Common myeloid progenitor, CD34-positive (primary cell): ENCODE measurements at regions of chr18 and their contacts with region 1.

Region 1: DNA sequence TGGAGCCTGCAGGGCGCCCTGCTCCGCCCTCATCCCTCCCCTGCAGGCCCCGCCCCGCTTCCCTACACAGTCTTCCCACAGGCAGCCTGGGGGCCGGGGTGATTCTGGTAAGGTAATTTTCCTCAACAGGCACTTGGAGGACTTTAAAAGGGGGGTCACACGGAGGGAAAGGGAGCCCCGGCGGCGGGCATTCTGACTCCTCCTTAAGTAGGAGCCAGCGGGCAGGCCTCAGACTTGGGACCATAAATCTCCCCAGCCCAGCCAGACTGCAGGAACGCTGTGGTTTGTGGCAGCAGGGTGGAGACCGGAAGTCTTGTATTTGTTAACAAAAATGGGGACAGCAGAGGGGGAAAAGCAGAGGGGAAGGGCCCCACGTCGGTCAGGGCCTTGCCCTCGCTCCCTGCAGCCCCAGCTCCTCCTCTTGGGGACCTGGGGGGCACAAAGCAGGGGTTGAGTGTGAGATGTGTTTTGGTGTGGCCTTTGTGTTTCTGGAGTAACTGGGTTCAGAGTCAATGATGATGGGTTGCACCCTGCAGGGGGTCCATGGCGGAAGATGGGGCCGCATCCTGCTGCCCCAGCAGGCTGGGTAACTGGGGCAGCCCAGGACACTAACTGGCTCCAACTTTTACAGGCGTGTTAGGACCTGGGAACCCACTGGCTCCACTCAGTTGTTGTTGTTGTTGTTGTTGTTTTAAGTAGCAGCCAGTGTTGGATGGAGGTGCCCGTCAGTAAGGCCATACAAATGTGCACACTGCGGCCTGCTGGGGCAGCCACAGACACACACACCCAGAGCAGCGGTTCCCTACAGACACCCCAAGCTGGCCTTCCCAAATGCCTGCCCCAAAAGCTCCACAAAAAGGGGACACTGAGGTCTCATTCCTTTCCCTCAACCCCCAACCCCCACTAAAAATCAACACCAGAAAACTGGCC is 27.7 kb downstream of the SMAD7 start:
- DNase-seq: peak; percentile 74 to 89 (median 84)
- H3K4me3 ChIP-seq: peak overlapping the region in 4 of 7 experiments; percentile 3 to 39 (median 37)
- H3K27ac ChIP-seq: no peak overlapping the region
- H3K4me1 ChIP-seq: peaks cover 7 to 59% (median 48%) of the 10 kb centered on the region in 4 experiments
- H3K27me3 ChIP-seq: peaks cover 0 to 10% (median 0%) of the 10 kb centered on the region in 5 experiments

Region 2: DNA sequence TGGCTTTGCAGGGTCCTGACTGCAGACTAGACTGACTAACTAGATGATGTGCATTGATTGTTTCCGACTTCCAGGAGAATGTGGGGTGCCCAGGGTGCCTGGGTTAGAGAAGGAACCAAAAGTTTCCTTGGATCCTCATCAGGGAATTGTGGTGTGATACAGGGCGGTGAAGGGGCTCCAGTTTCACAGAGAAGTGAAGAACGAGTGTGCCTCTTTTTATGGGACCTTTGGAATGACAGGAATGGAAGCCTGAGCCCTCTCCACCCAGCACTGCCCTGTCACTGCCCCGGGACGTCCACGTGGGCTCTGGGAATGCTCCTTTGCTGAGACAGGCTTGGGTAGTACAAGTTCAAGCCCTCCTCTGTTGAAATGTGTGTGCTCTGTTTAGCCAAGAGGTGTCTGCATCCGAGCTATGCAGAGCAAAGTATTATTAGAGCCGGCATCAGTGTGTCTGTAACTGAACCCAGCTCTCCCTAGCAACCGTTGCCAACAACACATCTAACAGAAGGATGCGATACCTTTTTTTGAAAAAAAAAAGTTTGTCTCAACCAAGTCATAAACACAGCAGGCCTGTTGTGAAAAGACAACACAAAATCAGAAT is 155.9 kb before region 1 on chr18:
- CTCF ChIA-PET with region 1: no interaction called
- POLR2A ChIA-PET with region 1: no interaction called
- DNase-seq: peak in 2 of 3 donors; percentile 25 to 50
- H3K4me3 ChIP-seq: no peak overlapping the region
- H3K27ac ChIP-seq: no peak overlapping the region
- H3K4me1 ChIP-seq: peaks cover 0 to 23% (median 15%) of the 10 kb centered on the region in 4 experiments
- H3K27me3 ChIP-seq: no peaks in the 10 kb centered on the region

Region 3: GRCh38 chr18:48934723-48935432 is 11.8 kb after region 1 on chr18:
- CTCF ChIA-PET with region 1: interaction called, 17 read pairs
- POLR2A ChIA-PET with region 1: interaction called, 12 read pairs
- DNase-seq: no peak
- H3K4me3 ChIP-seq: peak overlapping the region in 4 of 7 experiments; percentile 14 to 46 (median 32)
- H3K27ac ChIP-seq: no peak overlapping the region
- H3K4me1 ChIP-seq: peaks cover 17 to 64% (median 50%) of the 10 kb centered on the region in 4 experiments
- H3K27me3 ChIP-seq: peaks cover 0 to 8% (median 0%) of the 10 kb centered on the region in 5 experiments

Region 4: GRCh38 chr18:48940854-48941611 is 18.0 kb after region 1 on chr18:
- CTCF ChIA-PET with region 1: interaction called, 11 read pairs
- POLR2A ChIA-PET with region 1: interaction called, 10 read pairs
- DNase-seq: peak; percentile 91 to 96 (median 92)
- H3K4me3 ChIP-seq: peak overlapping the region in 3 of 7 experiments; percentile 32 to 55 (median 47)
- H3K27ac ChIP-seq: no peak overlapping the region
- H3K4me1 ChIP-seq: peaks cover 7 to 32% (median 28%) of the 10 kb centered on the region in 4 experiments
- H3K27me3 ChIP-seq: peaks cover 0 to 46% (median 13%) of the 10 kb centered on the region in 5 experiments

Region 5: DNA sequence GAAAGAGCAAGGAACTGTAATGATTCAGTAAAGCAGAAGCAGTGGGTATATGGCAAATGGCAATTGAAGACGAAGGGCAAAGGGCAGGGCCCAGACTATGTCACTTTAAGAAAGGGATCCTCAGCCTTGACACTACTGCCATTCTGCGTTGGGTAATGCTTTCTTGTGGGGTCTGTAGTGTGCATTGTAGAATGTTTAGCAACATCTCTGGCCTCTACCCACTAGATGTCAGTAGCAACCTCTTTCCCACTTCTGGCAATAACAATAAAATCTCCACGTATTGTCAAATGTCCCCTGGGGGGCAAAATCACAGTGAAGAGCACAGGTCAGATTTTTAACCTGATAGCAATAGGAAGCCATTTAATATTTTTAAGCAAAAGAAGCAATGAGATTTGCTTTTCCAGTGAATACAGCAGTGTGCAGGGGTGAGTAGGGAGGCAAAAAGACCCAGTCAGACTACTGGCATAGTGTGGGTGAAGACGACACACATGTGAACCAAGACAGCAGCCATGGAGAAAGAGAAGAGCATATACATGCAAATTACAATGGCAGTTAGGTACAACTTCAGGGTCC is 327.8 kb after region 1 on chr18:
- CTCF ChIA-PET with region 1: no interaction called
- POLR2A ChIA-PET with region 1: no interaction called
- DNase-seq: peak; percentile 24 to 46 (median 45)
- H3K4me3 ChIP-seq: no peak overlapping the region
- H3K27ac ChIP-seq: no peak overlapping the region
- H3K4me1 ChIP-seq: peaks cover 5 to 24% (median 13%) of the 10 kb centered on the region in 4 experiments
- H3K27me3 ChIP-seq: no peaks in the 10 kb centered on the region